Transverse colon (tissue), 4 donors: ENCODE measurements at regions of chr12 and their contacts with region 1.

Region 1: GRCh38 chr12:8045952-8046944 is 13.7 kb downstream of the FOXJ2 start:
- DNase-seq: peak; percentile 79
- H3K4me3 ChIP-seq: no peak overlapping the region
- H3K27ac ChIP-seq: no peak overlapping the region
- H3K4me1 ChIP-seq: peaks cover 0 to 2% (median 0%) of the 10 kb centered on the region in 4 donors
- H3K27me3 ChIP-seq: no peaks in the 10 kb centered on the region
- CTCF ChIP-seq: peak; percentile 56 to 90 (median 82)
- EP300 ChIP-seq: no peak
- POLR2A ChIP-seq: no peak

Region 2: DNA sequence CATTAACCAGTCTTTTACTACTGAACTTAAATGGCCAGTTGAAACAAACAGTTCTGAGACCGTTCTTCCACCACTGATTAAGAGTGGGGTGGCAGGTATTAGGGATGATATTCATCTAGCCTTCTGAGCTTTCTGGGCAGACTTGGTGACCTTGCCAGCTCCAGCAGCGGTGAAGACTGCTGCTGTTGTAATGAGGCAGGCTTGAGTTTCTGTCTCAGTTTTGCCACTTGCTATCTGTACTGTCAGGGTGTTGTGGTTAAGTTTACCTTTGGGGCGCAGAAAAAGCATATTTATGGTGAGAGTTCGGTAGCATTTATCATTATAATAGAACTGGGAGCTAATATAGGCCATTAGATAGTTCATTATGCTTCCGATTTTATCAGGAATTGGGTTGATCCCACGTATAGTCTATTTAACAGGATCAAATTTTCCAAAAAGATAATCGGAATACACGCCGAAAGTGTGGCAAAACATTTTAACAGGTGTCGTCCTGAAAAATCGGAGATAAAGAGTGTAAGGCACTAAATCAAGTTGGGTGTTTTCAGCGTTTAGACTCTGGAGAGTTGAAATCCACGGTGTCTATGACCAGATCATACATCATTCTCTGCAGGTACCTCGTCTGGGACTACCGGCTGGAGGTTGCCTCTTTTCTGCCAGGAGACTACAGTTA is 35.1 kb after region 1 on chr12:
- in situ Hi-C with region 1: no loop called
- intact Hi-C with region 1: loop called (anchors 2 kb)
- DNase-seq: peak; percentile 36
- H3K4me3 ChIP-seq: peak overlapping the region; percentile 75 to 97 (median 85)
- H3K27ac ChIP-seq: peak overlapping the region; percentile 92 to 95 (median 94)
- H3K4me1 ChIP-seq: peaks cover 7 to 30% (median 16%) of the 10 kb centered on the region in 4 donors
- H3K27me3 ChIP-seq: no peaks in the 10 kb centered on the region
- CTCF ChIP-seq: no peak
- EP300 ChIP-seq: no peak
- POLR2A ChIP-seq: no peak

Region 3: DNA sequence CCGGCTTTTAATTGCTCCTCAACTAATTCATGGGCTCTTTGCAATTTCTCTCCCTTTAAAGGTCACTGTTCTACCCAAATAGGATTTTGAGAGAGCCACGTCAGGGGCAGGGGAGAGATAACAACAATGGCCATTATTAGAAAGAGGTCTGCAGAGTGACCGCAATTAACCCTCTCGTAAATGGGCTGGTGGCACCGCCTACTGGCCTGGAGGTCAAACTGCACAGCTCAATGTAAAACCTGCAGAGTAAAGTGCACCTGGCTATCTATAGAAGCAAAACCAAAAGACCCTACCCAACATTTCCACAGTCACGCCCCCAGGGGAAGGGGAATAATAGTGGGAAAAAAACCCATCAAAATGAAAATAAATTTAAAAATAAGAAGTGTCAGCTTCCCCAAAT is 516.1 kb after region 1 on chr12:
- in situ Hi-C with region 1: no loop called
- intact Hi-C with region 1: no loop called
- DNase-seq: no peak
- H3K4me3 ChIP-seq: no peak overlapping the region
- H3K27ac ChIP-seq: no peak overlapping the region
- H3K4me1 ChIP-seq: no peaks in the 10 kb centered on the region
- H3K27me3 ChIP-seq: no peaks in the 10 kb centered on the region
- CTCF ChIP-seq: no peak
- EP300 ChIP-seq: no peak
- POLR2A ChIP-seq: no peak

Region 4: DNA sequence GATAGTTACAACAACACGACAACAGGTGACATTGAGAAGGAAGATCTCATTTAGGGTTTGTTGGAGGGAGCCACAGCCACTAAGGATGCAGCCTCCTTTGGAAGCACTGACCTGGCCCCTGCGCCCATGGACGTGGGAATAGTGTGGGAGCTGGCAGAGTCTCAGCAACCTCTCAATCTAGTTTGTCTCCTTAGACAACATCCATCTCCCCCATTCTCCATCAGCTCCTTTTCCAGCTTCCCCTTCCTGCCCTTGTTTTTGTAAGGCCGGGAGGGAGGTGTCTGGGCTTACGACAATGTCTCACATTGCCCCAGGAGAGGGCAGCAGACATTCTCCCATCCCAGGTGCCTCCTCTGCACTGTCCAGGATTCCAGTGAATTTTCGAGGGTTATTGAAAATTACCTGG is 1332.2 kb after region 1 on chr12:
- in situ Hi-C with region 1: no loop called
- intact Hi-C with region 1: no loop called
- DNase-seq: no peak
- H3K4me3 ChIP-seq: no peak overlapping the region
- H3K27ac ChIP-seq: no peak overlapping the region
- H3K4me1 ChIP-seq: no peaks in the 10 kb centered on the region
- H3K27me3 ChIP-seq: no peaks in the 10 kb centered on the region
- CTCF ChIP-seq: peak in 4 of 5 experiments; percentile 7 to 47 (median 32)
- EP300 ChIP-seq: no peak
- POLR2A ChIP-seq: no peak